Right cardiac atrium (tissue), 5 donors: ENCODE measurements at regions of chr4 and their contacts with region 1.

Region 1: GRCh38 chr4:41611881-41612871 is 74.2 kb downstream of the LIMCH1 start:
- DNase-seq: peak; percentile 74 to 89 (median 89)
- ATAC-seq: peak; percentile 95 to 96
- H3K4me3 ChIP-seq: peak overlapping the region; percentile 17
- H3K27ac ChIP-seq: peak overlapping the region; percentile 82
- H3K4me1 ChIP-seq: peaks cover 9% of the 10 kb centered on the region
- H3K27me3 ChIP-seq: no peaks in the 10 kb centered on the region

Region 2: GRCh38 chr4:41454423-41454822 is 157.8 kb before region 1 on chr4:
- intact Hi-C with region 1: loop called in 1 of 4 experiments (anchors 10 kb)
- DNase-seq: peak in 2 of 3 donors; percentile 24 to 57
- ATAC-seq: peak; percentile 69 to 86
- H3K4me3 ChIP-seq: no peak overlapping the region
- H3K27ac ChIP-seq: no peak overlapping the region
- H3K4me1 ChIP-seq: peaks cover 7% of the 10 kb centered on the region
- H3K27me3 ChIP-seq: no peaks in the 10 kb centered on the region